ENCODE measurements at regions of chr1 and their contacts with region 1.

Region 1: GRCh38 chr1:116570358-116571200 is at the start of gene CD58:
- DNase-seq: peak; percentile 80
- H3K4me3 Mint-ChIP-seq: peak within 1 kb of the TSS; percentile 81
- H3K27ac Mint-ChIP-seq: peak within 1 kb of the TSS; percentile 38
- H3K4me1 Mint-ChIP-seq: peaks cover 39% of the 10 kb centered on the region
- H3K27me3 Mint-ChIP-seq: peaks cover 7% of the 10 kb centered on the region
- total RNA-seq, gene CD58: 3.9 to 4.2 TPM

Region 2: DNA sequence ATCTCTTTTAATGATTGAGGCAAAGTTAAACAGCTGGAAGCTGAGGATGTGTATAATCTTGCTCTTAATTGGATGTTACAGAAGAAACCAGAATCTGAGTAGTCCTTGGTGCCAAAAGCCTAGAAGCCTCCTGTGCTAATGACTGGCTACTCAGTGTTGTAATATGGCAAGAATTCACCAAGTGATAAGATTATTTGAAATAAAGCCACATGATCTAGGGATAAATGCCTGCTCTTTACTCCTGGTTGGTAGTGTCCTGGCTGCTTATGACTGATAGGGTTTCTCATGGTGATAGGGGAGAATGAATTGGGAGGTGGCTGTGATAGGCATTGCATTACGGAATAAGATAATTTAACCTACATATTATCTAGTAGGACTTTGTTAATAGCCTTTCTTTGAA is 473.0 kb before region 1 on chr1:
- CTCF ChIA-PET with region 1: no interaction called
- intact Hi-C with region 1: no loop called
- DNase-seq: no peak
- H3K4me3 Mint-ChIP-seq: no peak overlapping the region
- H3K27ac Mint-ChIP-seq: no peak overlapping the region
- H3K4me1 Mint-ChIP-seq: no peaks in the 10 kb centered on the region
- H3K27me3 Mint-ChIP-seq: peaks cover 21% of the 10 kb centered on the region

Region 3: GRCh38 chr1:116556289-116557006 is 14.1 kb before region 1 on chr1:
- CTCF ChIA-PET with region 1: interaction called, 4 read pairs
- intact Hi-C with region 1: loop called (anchors 1 kb)
- DNase-seq: peak; percentile 82
- H3K4me3 Mint-ChIP-seq: no peak overlapping the region
- H3K27ac Mint-ChIP-seq: peak overlapping the region; percentile 78
- H3K4me1 Mint-ChIP-seq: peaks cover 56% of the 10 kb centered on the region
- H3K27me3 Mint-ChIP-seq: no peaks in the 10 kb centered on the region

Region 4: DNA sequence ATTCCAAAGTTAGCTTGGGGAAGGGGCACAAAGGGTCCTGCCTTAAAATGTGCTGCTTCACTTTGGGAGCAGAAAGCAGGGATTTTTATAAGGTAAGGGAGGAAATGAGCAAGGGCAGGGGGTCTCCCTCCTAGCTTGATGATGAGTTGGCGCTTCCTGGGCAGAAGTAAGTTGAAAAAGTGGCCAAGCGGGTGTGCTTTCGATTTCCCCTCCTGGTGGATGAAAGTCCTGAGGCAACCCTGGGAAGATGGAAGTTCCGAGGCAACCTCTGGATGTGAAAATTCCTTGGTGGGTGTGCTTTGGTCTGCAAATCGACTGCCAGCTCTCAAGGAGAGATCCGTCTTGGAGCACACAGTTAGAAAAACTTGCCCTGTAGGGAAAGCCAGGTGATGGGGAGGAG is 141.9 kb after region 1 on chr1:
- CTCF ChIA-PET with region 1: no interaction called
- intact Hi-C with region 1: loop called (anchors 1 kb)
- DNase-seq: peak; percentile 56
- H3K4me3 Mint-ChIP-seq: no peak overlapping the region
- H3K27ac Mint-ChIP-seq: peak overlapping the region; percentile 7
- H3K4me1 Mint-ChIP-seq: peaks cover 13% of the 10 kb centered on the region
- H3K27me3 Mint-ChIP-seq: peaks cover 2% of the 10 kb centered on the region

Region 5: GRCh38 chr1:116743535-116743934 is 173.0 kb after region 1 on chr1:
- CTCF ChIA-PET with region 1: no interaction called
- intact Hi-C with region 1: no loop called
- DNase-seq: no peak
- H3K4me3 Mint-ChIP-seq: no peak overlapping the region
- H3K27ac Mint-ChIP-seq: peak overlapping the region; percentile 37
- H3K4me1 Mint-ChIP-seq: peaks cover 31% of the 10 kb centered on the region
- H3K27me3 Mint-ChIP-seq: no peaks in the 10 kb centered on the region

Region 6: DNA sequence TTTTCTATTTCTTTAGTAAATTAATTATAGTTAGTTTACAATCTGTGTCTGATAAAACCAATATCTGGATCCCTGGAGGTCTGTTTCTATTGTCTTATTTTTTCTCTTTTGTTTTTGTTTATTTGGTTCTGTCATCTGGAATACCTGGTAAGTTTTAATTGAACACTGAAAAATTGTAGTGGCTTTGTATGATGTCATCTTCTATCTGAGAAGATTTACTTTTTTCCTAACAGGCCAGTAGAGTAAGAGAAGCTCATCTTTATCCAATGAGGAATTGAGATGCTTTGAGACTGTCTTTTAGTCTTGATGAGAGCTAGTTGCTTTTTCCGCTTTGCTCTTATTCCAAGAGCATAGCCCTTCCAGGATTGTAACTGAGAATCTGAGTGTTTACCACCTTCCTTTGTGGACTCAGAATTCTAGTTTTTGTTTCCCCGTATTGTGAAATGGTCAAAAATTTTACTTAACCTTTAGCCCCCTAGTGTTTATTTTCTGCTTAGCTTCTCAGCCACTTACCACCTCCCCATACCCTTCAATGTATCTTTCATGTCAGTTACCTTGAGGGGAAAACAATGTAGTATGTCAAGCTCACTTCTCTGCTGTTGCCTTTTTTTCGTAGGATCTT is 364.1 kb after region 1 on chr1:
- CTCF ChIA-PET with region 1: no interaction called
- intact Hi-C with region 1: loop called (anchors 10 kb)
- DNase-seq: no peak
- H3K4me3 Mint-ChIP-seq: no peak overlapping the region
- H3K27ac Mint-ChIP-seq: no peak overlapping the region
- H3K4me1 Mint-ChIP-seq: peaks cover 18% of the 10 kb centered on the region
- H3K27me3 Mint-ChIP-seq: no peaks in the 10 kb centered on the region

Region 7: DNA sequence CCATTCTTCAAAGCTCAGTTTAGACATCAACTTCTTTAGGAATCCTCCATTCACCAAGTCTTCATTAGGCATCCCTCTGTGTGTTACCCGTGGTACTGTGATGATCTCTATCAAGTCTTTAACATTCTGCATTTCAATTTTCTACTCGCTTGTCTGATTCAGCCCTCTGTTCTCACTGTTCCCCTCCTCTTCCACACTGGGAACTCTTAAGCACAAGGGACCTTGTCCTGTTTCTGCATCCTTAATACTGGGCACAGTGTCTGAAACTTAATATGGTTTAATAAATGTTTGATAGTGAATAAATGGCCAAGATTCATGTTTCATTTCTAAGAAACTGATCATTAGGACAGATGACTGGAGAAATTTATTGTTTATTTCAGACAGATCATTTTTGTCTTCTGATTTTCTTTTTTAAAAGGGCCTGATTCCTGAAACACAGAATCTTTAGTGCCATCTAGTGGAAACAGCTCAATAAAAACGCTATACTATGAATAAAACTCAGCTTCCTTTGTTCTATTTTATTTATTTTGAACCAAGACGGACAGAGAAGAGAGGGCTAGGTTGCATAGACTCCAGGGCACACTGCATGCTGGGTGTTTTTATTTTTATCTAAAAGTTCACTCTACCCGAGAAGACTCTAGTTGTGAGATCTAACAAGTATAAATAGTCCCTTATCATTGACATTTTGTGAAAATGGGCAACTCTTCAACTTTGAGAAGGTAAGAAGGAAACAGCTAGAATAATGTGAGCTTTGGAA is 557.9 kb after region 1 on chr1:
- CTCF ChIA-PET with region 1: interaction called, 9 read pairs
- intact Hi-C with region 1: loop called (anchors 1 kb)
- DNase-seq: no peak
- H3K4me3 Mint-ChIP-seq: no peak overlapping the region
- H3K27ac Mint-ChIP-seq: no peak overlapping the region
- H3K4me1 Mint-ChIP-seq: no peaks in the 10 kb centered on the region
- H3K27me3 Mint-ChIP-seq: peaks cover 6% of the 10 kb centered on the region

Measured in activated naive CD4-positive, alpha-beta T cell treated with anti-CD3 and anti-CD28 coated beads for 36 hours (primary cell).